Adrenal gland (tissue), 19 donors: ENCODE measurements at regions of chr7 and their contacts with region 1.

Region 1: GRCh38 chr7:116525913-116526861 is 1.4 kb downstream of the CAV1 start:
- DNase-seq: peak; percentile 55 to 72 (median 60)
- H3K4me3 ChIP-seq: peak overlapping the region; percentile 8 to 76 (median 39)
- H3K27ac ChIP-seq: peak overlapping the region in 3 of 5 donors; percentile 20 to 72 (median 43)
- H3K4me1 ChIP-seq: peaks cover 8 to 14% of the 10 kb centered on the region in 2 donors
- H3K27me3 ChIP-seq: peaks cover 33% of the 10 kb centered on the region
- CTCF ChIP-seq: peak in 3 of 6 experiments; percentile 77 to 82 (median 80)
- POLR2A ChIP-seq: no peak

Region 2: DNA sequence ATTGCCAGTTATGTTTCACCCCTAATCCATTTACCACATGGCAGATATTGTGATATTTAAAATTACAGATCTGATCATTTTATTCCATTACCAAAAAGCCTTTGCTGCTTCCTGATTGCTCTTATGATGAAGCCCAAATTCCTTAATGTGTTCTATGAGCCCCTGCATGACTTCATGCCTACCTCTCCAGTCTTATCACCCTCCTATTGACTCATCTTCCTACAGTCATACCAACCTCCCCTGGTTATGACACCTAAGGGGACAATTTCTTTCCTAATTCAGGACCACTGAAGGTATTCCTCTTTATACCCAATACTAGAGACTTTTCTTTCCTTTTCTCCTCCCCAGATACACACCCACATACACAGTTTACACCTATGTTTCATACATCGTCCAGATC is 279.8 kb before region 1 on chr7:
- intact Hi-C with region 1: no loop called
- DNase-seq: no peak
- H3K4me3 ChIP-seq: no peak overlapping the region
- H3K27ac ChIP-seq: no peak overlapping the region
- H3K4me1 ChIP-seq: no peaks in the 10 kb centered on the region
- H3K27me3 ChIP-seq: no peaks in the 10 kb centered on the region
- CTCF ChIP-seq: no peak
- POLR2A ChIP-seq: no peak

Region 3: DNA sequence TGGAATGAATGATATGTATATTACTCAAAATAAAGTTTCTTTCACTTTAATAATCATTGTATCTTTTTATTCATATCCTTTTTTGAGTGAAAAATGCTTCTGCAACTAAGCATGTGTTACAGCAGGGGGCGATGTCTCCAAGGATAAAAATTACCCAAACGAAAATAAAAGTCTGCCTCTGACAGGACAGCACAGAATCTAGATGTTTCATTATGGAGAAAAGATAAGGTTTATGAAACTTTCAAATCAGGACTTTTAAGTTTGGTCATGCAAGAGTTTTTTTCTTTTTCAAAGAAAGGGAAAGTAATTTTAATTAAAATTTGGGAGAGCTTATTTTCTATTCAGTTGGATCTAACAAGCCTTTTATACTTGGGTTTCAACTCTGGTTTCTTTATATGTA is 267.5 kb before region 1 on chr7:
- intact Hi-C with region 1: loop called (anchors 5 to 10 kb)
- DNase-seq: peak in 6 of 7 donors; percentile 19 to 45 (median 28)
- H3K4me3 ChIP-seq: no peak overlapping the region
- H3K27ac ChIP-seq: no peak overlapping the region
- H3K4me1 ChIP-seq: peaks cover 0 to 3% of the 10 kb centered on the region in 2 donors
- H3K27me3 ChIP-seq: no peaks in the 10 kb centered on the region
- CTCF ChIP-seq: peak; percentile 74 to 91 (median 87)
- POLR2A ChIP-seq: no peak

Region 4: GRCh38 chr7:116305485-116306408 is 220.4 kb before region 1 on chr7:
- intact Hi-C with region 1: no loop called
- DNase-seq: no peak
- H3K4me3 ChIP-seq: no peak overlapping the region
- H3K27ac ChIP-seq: no peak overlapping the region
- H3K4me1 ChIP-seq: no peaks in the 10 kb centered on the region
- H3K27me3 ChIP-seq: no peaks in the 10 kb centered on the region
- CTCF ChIP-seq: no peak
- POLR2A ChIP-seq: no peak

Region 5: DNA sequence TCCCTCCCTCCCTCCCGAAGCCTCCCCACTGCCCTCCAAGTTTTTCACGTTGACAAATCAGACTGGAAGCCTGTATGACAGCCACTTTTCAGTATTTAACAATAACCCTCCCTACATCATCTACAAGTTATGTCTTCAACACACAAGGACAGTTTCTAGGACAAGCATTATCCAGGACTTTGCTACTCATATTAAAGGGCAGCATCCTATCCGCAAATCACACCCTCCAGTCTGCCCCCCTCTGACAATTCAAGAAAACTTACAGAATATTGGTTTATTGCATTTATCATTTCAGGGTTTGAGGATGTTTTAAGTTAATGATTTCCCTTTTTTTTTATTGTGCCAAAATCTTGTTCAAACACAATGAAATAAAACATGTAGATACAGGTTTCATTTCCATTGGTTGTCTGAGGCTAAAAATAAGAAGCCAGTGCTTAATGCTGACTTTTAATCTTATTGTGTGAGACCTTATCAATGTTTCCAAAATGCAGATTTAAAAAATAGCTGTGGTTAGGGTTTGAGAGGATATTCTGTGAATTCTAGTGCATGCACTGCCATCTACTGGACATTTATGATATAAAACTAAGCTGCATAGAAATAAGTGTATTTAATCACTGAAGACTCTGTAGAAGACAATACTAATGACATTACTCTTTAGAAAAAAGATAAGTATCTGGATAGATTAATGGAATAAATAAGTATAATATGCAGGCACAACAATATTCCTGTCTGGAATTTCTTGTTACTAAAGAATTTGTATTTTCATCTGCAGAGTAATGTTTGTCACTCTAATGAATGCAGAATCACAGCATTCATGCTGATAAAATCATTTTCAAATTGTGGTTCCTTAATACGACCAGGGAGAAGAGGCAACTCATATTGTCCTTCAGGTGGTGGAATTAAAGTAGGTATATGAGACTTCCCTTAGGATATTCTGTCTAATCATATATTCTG is 62.7 kb after region 1 on chr7:
- intact Hi-C with region 1: no loop called
- DNase-seq: no peak
- H3K4me3 ChIP-seq: no peak overlapping the region
- H3K27ac ChIP-seq: no peak overlapping the region
- H3K4me1 ChIP-seq: peaks cover 3 to 6% of the 10 kb centered on the region in 2 donors
- H3K27me3 ChIP-seq: no peaks in the 10 kb centered on the region
- CTCF ChIP-seq: peak; percentile 65 to 87 (median 79)
- POLR2A ChIP-seq: no peak